OCI-LY7 (cell line): ENCODE measurements at regions of chr16 and their contacts with region 1.

Region 1: GRCh38 chr16:12553191-12553590 is 250.5 kb downstream of the CPPED1 start:
- DNase-seq: peak; percentile 52
- H3K4me3 ChIP-seq: no peak overlapping the region
- H3K27ac ChIP-seq: peak overlapping the region; percentile 98
- H3K4me1 ChIP-seq: peaks cover 93% of the 10 kb centered on the region
- CTCF ChIP-seq: peak; percentile 54

Region 2: GRCh38 chr16:12340151-12340733 is 212.9 kb before region 1 on chr16:
- CTCF ChIA-PET with region 1: no interaction called
- POLR2A ChIA-PET with region 1: interaction called, 3 read pairs
- intact Hi-C with region 1: loop called (anchors 10 kb)
- DNase-seq: peak; percentile 67
- H3K4me3 ChIP-seq: no peak overlapping the region
- H3K27ac ChIP-seq: no peak overlapping the region
- H3K4me1 ChIP-seq: peaks cover 61% of the 10 kb centered on the region
- CTCF ChIP-seq: peak; percentile 89

Region 3: DNA sequence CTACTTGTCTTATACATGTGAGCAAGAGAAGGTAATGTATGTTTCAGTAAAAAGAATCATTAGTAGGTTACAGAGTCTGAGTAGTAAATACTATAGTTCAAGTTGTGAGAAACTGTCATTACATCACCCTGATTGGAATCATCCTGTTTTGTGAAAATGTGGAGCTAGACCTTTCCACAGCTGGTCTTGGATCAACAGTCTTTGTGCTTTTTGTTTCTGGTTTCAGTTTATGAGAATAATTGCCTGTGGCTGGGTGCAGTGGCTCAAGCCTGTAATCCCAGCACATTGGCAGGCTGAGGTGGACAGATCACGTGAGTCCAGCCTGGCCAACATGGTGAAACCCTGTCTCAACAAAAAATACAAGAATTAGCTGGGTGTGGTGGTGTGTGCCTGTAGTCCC is 328.5 kb after region 1 on chr16:
- CTCF ChIA-PET with region 1: no interaction called
- POLR2A ChIA-PET with region 1: no interaction called
- intact Hi-C with region 1: no loop called
- DNase-seq: no peak
- H3K4me3 ChIP-seq: no peak overlapping the region
- H3K27ac ChIP-seq: no peak overlapping the region
- H3K4me1 ChIP-seq: no peaks in the 10 kb centered on the region
- CTCF ChIP-seq: no peak